Transverse colon (tissue), 4 donors: ENCODE measurements at regions of chr1 and their contacts with region 1.

Region 1: DNA sequence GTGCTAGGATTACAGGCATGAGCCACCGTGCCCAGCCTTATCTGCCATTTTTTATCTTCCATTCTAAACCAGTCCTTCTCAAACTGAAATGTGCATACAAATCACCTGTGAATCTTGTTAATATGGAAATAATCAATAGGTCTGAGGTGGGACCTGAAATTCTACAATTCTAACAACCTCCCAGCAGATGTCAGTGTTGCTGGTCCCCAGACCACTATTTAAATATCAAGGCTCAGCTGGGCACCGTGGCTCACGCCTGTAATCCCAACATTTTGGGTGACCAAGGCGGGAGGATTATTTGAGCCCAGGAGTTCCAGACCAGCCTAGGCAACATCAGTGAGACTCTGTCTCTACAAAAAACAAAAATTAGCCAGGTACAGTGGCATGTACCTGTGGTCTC is 4.1 kb downstream of the UQCRHL start:
- DNase-seq: no peak
- H3K4me3 ChIP-seq: no peak overlapping the region
- H3K27ac ChIP-seq: no peak overlapping the region
- H3K4me1 ChIP-seq: peaks cover 12 to 25% (median 22%) of the 10 kb centered on the region in 4 donors
- H3K27me3 ChIP-seq: no peaks in the 10 kb centered on the region
- CTCF ChIP-seq: peak; percentile 11 to 26 (median 23)
- EP300 ChIP-seq: no peak
- POLR2A ChIP-seq: no peak

Region 2: DNA sequence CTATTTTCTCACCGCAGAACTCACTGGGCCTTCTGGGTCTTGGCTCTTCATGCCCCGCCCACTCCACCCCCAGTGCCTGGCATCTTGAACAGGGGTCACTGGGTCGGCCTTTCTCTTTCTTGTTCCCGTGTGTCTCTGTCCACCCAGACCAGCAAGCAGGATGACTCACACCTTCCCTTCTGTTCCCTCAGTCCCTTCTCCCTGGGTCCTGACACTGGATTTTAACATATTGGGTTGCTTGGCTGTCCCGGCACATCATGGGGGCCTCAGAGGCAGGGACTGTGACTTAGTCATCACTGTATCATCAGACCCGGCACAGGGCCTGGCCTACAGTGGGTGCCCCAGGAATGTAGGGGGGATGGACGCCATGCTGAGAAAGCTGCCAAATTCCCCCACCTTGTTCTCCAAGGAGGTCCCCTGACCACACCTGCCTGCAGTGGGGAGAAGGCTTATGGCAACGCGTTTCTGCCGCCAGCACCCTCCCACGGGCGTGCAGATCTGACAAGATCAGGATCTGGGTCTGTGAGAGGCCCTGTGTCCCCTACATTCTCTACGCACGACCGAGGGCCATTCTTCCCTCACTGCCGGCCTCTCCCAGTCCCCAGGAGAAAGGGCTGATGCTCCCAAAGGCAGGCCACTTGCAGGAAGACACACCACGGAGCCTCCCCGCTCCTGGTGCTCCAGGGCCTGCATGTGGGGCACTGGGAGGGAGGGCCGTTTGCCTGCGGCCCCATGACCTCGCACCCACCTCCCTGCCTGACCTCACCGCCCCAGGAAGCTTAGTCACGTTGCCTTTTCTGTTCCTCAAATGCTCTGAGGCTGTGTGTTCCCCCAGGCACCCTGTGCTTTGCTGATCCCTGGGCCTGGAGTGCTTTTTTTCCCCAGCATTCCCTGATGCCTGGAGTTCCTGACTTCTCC is 807.0 kb before region 1 on chr1:
- in situ Hi-C with region 1: no loop called
- intact Hi-C with region 1: no loop called
- DNase-seq: no peak
- H3K4me3 ChIP-seq: no peak overlapping the region
- H3K27ac ChIP-seq: no peak overlapping the region
- H3K4me1 ChIP-seq: no peaks in the 10 kb centered on the region
- H3K27me3 ChIP-seq: no peaks in the 10 kb centered on the region
- CTCF ChIP-seq: no peak
- EP300 ChIP-seq: no peak
- POLR2A ChIP-seq: no peak

Region 3: DNA sequence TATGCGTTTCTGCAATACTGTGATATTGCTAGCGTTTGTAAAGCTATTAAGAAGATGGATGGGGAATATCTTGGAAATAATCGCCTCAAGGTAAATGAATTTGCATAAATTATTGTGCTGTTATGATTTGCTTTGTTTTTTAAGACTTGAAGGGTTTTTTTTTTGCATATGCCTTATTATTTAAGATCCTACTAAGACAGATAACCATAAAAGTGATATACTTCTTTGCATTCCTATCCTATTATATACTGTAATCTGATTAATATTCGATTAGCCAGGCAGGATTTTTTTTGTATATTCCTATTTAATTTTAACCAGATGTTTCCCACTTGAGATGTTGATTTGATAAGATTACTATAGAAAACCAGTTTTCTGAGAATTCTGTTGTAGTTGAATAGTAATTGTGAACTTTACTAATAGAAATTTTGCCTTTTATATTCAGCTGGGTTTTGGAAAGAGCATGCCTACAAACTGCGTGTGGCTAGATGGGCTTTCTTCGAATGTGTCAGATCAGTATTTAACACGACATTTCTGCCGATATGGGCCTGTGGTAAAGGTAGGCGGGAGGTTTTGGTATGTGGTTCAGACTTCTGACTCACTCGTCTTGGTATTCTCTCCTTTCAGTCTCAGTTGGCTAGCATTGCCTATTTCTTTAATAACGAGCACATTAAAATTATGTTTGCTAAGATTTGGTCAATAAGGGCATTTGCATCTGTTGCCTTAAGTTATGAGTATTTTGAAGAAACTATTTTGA is 115.8 kb after region 1 on chr1:
- in situ Hi-C with region 1: loop called in 2 of 4 experiments (anchors 25 kb)
- intact Hi-C with region 1: no loop called
- DNase-seq: no peak
- H3K4me3 ChIP-seq: no peak overlapping the region
- H3K27ac ChIP-seq: no peak overlapping the region
- H3K4me1 ChIP-seq: peaks cover 0 to 5% (median 0%) of the 10 kb centered on the region in 4 donors
- H3K27me3 ChIP-seq: no peaks in the 10 kb centered on the region
- CTCF ChIP-seq: no peak
- EP300 ChIP-seq: no peak
- POLR2A ChIP-seq: no peak

Region 4: DNA sequence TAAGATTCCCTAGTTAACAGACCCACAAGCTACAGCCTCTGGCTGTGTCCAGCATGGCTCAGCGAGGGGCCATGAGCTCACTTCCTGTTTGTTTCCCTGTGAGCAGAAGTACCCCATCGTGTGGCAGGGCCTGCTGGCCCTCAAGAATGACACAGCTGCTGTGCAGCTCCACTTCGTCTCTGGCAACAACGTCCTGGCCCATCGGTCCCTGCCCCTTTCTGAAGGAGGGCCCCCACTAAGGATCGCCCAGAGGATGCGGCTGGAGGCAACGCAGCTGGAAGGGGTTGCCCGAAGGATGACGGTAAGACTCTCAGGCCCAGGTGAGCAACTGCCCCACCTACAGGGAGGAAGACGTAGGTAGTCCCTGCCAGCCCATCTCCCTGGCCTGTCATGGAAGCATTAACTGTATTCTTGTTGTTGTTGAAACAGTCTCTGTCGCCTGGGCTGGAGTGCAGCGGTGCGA is 134.4 kb after region 1 on chr1:
- in situ Hi-C with region 1: no loop called
- intact Hi-C with region 1: no loop called
- DNase-seq: no peak
- H3K4me3 ChIP-seq: no peak overlapping the region
- H3K27ac ChIP-seq: no peak overlapping the region
- H3K4me1 ChIP-seq: peaks cover 0 to 12% (median 8%) of the 10 kb centered on the region in 4 donors
- H3K27me3 ChIP-seq: no peaks in the 10 kb centered on the region
- CTCF ChIP-seq: no peak
- EP300 ChIP-seq: no peak
- POLR2A ChIP-seq: no peak

Region 5: DNA sequence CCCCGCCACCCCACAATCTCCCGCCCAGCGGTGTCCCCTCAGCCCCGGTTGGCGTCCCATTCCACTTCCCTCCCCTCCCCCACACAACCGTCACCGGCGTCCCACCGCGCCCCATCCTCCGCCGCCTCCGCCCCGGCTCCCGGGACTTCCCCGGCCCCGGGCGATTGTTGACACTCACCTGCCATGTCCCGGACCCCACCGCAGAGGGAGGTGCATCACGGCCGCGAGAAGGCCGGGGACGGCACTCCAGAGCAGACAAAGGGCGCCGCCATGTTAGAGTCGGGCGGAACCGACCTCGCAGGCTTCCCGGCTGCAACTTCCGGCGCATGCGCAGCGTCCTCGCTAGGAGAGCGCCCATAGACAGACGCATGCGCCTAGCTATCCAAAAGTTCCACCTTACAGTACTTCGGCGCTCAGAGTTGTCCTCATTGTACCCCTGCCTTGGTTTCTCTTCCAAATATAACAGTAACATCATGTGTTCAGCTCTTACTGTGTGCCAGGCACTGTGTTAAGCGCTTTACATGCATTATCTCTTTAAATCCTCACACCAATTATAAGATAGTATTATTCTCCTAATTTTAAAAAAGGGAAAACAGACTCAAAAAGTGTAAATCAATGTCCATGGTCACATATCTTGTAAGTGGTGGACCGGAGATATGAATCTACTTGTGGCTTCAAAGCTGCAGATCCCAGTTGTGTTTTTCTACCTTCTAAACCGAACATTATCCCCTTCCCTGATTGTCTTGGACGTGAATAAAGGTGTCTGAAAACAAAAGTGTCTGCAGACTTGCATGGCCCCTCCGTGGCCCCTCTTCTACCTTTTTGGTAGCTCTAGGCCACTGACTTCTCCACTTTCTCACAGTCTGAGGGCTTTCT is 172.7 kb after region 1 on chr1 and contains the start of gene ZBTB17:
- in situ Hi-C with region 1: loop called in 3 of 4 experiments (anchors 10 to 25 kb)
- intact Hi-C with region 1: no loop called
- DNase-seq: peak; percentile 96
- H3K4me3 ChIP-seq: peak within 1 kb of the TSS; percentile 59 to 95 (median 80)
- H3K27ac ChIP-seq: peak within 1 kb of the TSS; percentile 80 to 89 (median 86)
- H3K4me1 ChIP-seq: peaks cover 6 to 17% (median 11%) of the 10 kb centered on the region in 4 donors
- H3K27me3 ChIP-seq: no peaks in the 10 kb centered on the region
- CTCF ChIP-seq: peak in 1 of 5 experiments; percentile 26
- EP300 ChIP-seq: no peak
- POLR2A ChIP-seq: peak; percentile 81
- total RNA-seq, gene ZBTB17: 33.3 to 113 (median 50.5) TPM

Region 6: GRCh38 chr1:15985611-15986297 is 182.4 kb after region 1 on chr1:
- in situ Hi-C with region 1: loop called in 3 of 4 experiments (anchors 10 to 25 kb)
- intact Hi-C with region 1: no loop called
- DNase-seq: no peak
- H3K4me3 ChIP-seq: no peak overlapping the region
- H3K27ac ChIP-seq: no peak overlapping the region
- H3K4me1 ChIP-seq: no peaks in the 10 kb centered on the region
- H3K27me3 ChIP-seq: no peaks in the 10 kb centered on the region
- CTCF ChIP-seq: no peak
- EP300 ChIP-seq: no peak
- POLR2A ChIP-seq: no peak

Region 7: GRCh38 chr1:16055613-16056520 is 252.5 kb after region 1 on chr1:
- in situ Hi-C with region 1: no loop called
- intact Hi-C with region 1: loop called (anchors 10 kb)
- DNase-seq: peak; percentile 92
- H3K4me3 ChIP-seq: no peak overlapping the region
- H3K27ac ChIP-seq: no peak overlapping the region
- H3K4me1 ChIP-seq: peaks cover 0 to 5% (median 0%) of the 10 kb centered on the region in 4 donors
- H3K27me3 ChIP-seq: peaks cover 4% of the 10 kb centered on the region
- CTCF ChIP-seq: peak; percentile 87 to 99 (median 96)
- EP300 ChIP-seq: no peak
- POLR2A ChIP-seq: no peak